ENCODE measurements at regions of chr1 and their contacts with region 1.

Region 1: DNA sequence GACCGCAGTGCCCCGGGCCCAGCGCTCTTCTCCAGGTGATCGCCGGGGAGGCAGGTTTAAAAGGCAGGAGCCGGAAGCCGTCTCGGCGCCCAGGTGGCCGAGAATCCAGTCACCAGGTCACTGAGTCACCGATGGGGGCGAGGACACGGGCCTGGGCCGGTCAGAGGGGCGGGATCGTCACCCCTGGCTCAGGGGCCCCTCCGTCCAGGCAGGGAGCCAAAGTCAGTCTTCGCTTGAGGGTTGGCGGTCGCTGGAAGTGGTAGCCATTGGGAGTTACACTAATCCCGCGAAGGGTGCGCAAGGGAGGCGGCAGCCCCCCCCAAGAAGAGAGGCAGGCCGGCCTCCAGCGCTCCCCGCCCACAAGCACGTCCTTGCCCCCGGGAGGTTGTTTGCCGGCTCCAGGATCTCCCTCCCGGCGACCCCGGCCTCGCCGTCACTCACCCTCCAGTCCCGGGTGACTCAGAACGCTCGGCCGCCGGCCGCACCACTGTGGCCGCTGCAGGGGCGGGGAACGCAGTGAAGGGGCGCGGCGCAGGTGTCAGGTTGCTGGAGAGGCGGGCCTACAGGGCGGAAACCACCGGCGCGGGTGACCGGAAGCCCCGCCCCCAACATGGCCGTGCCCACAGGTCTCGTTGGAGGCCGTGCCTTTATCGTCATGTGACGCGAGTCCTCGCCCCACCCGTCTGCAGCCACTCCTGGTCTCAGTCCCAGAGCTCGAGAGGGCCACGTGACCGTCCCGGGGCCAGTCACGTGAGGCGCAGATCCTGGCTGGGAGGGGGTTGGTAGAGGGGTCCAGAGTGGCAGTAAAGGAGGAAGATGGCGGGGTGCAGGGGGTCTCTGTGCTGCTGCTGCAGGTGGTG is at the starts of genes CLCN6 and MTHFR:
- DNase-seq: peak; percentile 97 to 100 (median 99)

Region 2: DNA sequence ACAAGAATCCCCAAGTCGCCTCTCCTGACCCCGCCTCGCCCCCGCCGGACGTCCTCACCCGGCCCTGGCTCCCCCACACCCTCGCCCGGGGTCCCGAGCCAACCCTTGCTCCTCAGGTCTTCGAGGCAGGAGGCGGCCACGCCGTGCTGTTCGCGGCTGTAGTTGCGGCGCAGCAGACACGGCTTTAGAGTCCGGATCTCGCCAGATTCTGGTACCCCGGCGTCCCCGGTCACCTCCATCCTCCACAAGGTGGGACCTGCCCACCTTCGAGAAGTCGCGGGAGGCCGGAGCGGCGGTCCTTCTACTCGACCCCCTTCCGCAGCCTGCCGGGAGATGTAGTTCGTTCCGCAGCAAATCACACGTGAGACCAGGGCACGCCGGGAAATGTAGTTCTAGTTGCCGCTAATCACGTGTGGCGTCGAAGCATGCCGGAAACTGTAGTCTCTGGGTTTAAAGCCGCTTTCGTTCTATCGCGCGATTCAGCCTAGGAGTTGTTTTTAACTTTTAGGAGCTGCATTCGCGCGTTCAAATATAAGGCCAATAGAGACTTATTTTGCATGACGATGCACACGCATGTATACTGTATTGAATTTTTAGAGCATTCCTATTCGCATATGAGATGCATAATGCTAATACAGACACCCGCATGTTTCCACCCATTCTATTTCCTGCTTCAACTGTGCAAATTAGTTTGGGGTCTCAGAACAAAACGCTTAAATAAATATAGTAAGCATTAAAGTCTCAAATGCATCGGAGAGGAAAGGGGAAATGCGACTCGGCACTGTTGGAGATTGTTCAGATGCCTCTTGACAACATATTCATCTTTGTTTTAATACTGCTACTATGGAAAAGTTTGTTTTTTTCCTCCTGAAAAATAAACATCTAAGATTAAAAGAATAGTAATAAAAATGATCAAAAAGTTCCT is 1333.2 kb before region 1 on chr1 and contains the start of gene DFFA:
- intact Hi-C with region 1: loop called (anchors 10 kb)
- DNase-seq: peak; percentile 93 to 98 (median 96)

Region 3: GRCh38 chr1:11735854-11736745 is 69.6 kb before region 1 on chr1 and contains the start of gene AGTRAP:
- intact Hi-C with region 1: loop called (anchors 5 kb)
- DNase-seq: peak; percentile 93 to 100 (median 97)

Region 4: DNA sequence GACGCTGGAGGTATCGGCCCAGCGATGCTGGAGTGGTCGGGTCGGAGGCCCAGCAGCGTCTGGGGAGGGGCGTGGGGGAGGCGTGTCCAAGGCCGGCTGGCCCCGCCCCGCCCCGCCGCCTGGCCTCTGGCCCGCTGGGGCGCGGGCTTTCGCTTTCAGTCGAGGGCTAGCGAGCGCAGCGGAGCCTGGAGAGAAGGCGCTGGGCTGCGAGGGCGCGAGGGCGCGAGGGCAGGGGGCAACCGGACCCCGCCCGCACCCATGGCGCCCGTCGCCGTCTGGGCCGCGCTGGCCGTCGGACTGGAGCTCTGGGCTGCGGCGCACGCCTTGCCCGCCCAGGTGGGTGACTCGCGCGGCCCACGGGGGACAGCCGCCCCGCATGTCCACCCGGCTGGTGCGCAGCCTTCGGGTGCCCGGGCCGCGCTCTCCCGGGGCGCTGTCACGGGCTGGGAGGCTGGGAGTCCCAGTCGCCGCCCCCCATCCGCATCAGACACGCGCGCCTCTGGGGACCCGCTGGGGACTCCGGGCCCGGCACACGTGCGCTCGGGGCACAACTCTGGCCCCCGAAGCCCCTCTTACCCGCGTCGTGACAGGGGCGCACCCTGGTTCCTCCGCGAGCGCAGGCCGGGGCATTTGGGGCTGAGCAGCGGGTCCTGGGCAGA is 361.3 kb after region 1 on chr1 and contains the start of gene TNFRSF1B:
- intact Hi-C with region 1: no loop called
- DNase-seq: peak in 25 of 42 donors; percentile 19 to 70 (median 45)